ENCODE measurements at regions of chr11 and their contacts with region 1.

Region 1: GRCh38 chr11:15208378-15209222 is 93.9 kb downstream of the INSC start:
- DNase-seq: peak; percentile 77 to 89
- ATAC-seq: peak; percentile 91
- H3K4me3 ChIP-seq: no peak overlapping the region
- H3K27ac ChIP-seq: no peak overlapping the region
- H3K4me1 ChIP-seq: no peaks in the 10 kb centered on the region
- H3K27me3 ChIP-seq: no peaks in the 10 kb centered on the region

Region 2: GRCh38 chr11:15101072-15101709 is 107.4 kb before region 1 on chr11:
- intact Hi-C with region 1: loop called (anchors 1 to 2 kb)
- DNase-seq: peak in 1 of 2 donors; percentile 77
- ATAC-seq: peak; percentile 84
- H3K4me3 ChIP-seq: no peak overlapping the region
- H3K27ac ChIP-seq: no peak overlapping the region
- H3K4me1 ChIP-seq: no peaks in the 10 kb centered on the region
- H3K27me3 ChIP-seq: no peaks in the 10 kb centered on the region

Region 3: GRCh38 chr11:15169815-15170551 is 38.6 kb before region 1 on chr11:
- intact Hi-C with region 1: loop called in 1 of 2 experiments (anchors 5 kb)
- DNase-seq: no peak
- ATAC-seq: no peak
- H3K4me3 ChIP-seq: no peak overlapping the region
- H3K27ac ChIP-seq: no peak overlapping the region
- H3K4me1 ChIP-seq: no peaks in the 10 kb centered on the region
- H3K27me3 ChIP-seq: no peaks in the 10 kb centered on the region

Region 4: DNA sequence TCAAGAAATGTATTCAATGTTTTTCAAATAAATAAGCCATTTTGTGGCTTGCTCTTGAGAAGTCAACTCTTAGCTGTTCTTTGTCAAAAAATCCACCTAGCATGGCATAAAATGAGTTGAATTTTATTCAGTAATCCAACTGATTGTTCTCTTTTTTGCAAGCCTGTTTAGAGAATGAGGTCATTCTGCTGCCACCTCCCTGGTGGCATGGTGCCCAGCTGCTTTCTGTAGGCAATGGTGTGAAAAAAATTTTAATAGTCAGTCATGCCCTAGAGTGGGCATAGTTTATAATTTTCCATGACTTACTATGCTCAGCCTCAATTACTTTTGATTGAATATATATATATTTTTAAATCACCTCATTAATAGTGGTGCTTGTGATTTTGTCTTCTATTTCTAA is 83.3 kb after region 1 on chr11:
- intact Hi-C with region 1: no loop called
- DNase-seq: no peak
- ATAC-seq: no peak
- H3K4me3 ChIP-seq: no peak overlapping the region
- H3K27ac ChIP-seq: no peak overlapping the region
- H3K4me1 ChIP-seq: no peaks in the 10 kb centered on the region
- H3K27me3 ChIP-seq: no peaks in the 10 kb centered on the region